CD14-positive monocyte (primary cell): ENCODE measurements at regions of chr1 and their contacts with region 1.

Region 1: DNA sequence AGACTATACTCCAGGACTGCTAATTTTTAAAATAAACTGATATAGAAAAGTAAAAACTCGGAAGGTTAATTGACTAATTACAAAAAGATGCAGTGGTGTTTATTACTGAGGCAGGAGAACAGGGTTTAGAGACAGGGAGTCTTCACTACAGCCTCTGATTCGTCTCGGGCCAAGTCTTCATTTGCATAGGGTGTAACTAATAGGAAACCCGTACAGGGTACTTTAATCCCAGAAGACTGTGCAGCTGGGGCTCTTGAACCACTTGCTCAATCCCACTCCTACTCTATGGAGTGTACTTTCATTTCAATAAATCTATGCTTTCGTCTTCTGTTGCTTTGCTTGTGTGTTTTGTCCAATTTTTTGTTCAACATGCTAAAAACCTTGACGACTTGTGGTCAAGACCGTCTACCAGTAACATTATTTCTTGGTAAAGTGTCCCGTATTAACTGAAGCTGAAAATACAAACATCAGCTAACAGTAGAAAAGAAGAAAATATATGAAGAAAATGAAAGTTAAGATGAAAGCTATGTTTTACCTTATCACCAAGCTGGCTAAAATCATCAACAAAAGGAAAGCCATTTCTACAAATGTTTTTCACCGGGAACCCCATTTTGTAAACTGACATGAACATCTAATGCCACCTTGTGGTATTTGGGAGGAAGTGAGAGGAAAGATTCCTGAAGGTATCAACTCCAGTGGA is 8.0 kb downstream of the SDHB start:
- DNase-seq: peak in 2 of 3 donors; percentile 44 to 45
- H3K4me3 ChIP-seq: peak overlapping the region in 1 of 3 experiments; percentile 62
- H3K4me3 Mint-ChIP-seq: peak overlapping the region; percentile 42 to 53
- H3K27ac ChIP-seq: peak overlapping the region; percentile 19 to 74
- H3K27ac Mint-ChIP-seq: peak overlapping the region; percentile 79 to 90 (median 82)
- H3K4me1 ChIP-seq: peaks cover 14 to 32% of the 10 kb centered on the region in 2 donors
- H3K4me1 Mint-ChIP-seq: peaks cover 19% of the 10 kb centered on the region
- H3K27me3 ChIP-seq: no peaks in the 10 kb centered on the region
- H3K27me3 Mint-ChIP-seq: no peaks in the 10 kb centered on the region
- CTCF ChIP-seq: peak; percentile 81

Region 2: GRCh38 chr1:16954579-16954978 is 91.2 kb before region 1 on chr1:
- intact Hi-C with region 1: loop called in 1 of 2 experiments (anchors 5 kb)
- DNase-seq: no peak
- H3K4me3 ChIP-seq: no peak overlapping the region
- H3K4me3 Mint-ChIP-seq: peak overlapping the region in 1 of 2 donors; percentile 24
- H3K27ac ChIP-seq: no peak overlapping the region
- H3K27ac Mint-ChIP-seq: peak overlapping the region in 1 of 7 donors; percentile 57
- H3K4me1 ChIP-seq: peaks cover 0 to 2% of the 10 kb centered on the region in 2 donors
- H3K4me1 Mint-ChIP-seq: peaks cover 2% of the 10 kb centered on the region
- H3K27me3 ChIP-seq: no peaks in the 10 kb centered on the region
- H3K27me3 Mint-ChIP-seq: peaks cover 0 to 3% (median under 1%) of the 10 kb centered on the region in 3 donors
- CTCF ChIP-seq: no peak

Region 3: DNA sequence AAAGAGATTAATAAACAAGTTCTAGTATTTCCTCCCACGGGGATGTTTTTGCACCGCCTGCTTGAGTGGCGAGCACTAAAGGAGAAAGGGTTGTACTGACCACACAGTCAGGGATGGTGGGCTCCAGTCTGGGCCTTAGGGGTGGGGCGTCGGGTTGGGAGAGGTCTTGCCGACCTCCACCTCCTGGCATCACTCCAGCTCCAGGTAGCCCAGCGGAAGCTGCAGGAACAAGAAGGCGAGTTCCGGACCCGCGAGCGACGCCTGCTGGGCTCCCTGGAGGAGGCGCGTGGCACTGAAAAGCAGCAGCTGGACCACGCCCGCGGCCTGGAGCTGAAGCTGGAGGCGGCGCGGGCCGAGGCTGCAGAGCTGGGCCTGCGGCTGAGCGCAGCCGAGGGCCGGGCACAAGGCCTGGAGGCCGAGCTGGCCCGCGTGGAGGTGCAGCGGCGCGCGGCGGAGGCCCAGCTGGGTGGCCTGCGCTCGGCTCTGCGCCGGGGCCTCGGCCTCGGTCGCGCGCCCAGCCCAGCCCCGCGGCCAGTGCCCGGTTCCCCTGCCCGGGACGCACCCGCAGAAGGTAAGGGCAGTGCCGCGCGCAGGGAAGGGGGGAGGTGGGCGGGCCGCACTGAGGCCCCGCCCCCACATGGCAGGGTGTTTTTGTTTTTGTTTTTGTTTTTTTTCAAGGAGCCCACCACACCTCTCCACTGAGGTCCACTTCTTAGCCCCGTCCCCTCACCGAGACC is 85.1 kb before region 1 on chr1:
- intact Hi-C with region 1: loop called in 1 of 2 experiments (anchors 5 kb)
- DNase-seq: peak; percentile 43 to 59 (median 53)
- H3K4me3 ChIP-seq: peak overlapping the region in 1 of 3 experiments; percentile 53
- H3K4me3 Mint-ChIP-seq: peak overlapping the region; percentile 68 to 79
- H3K27ac ChIP-seq: no peak overlapping the region
- H3K27ac Mint-ChIP-seq: no peak overlapping the region
- H3K4me1 ChIP-seq: peaks cover 4 to 10% of the 10 kb centered on the region in 2 donors
- H3K4me1 Mint-ChIP-seq: peaks cover 7% of the 10 kb centered on the region
- H3K27me3 ChIP-seq: no peaks in the 10 kb centered on the region
- H3K27me3 Mint-ChIP-seq: peaks cover 0 to 6% (median 5%) of the 10 kb centered on the region in 3 donors
- CTCF ChIP-seq: peak; percentile 85